ENCODE measurements at regions of chr19 and their contacts with region 1.

Region 1: DNA sequence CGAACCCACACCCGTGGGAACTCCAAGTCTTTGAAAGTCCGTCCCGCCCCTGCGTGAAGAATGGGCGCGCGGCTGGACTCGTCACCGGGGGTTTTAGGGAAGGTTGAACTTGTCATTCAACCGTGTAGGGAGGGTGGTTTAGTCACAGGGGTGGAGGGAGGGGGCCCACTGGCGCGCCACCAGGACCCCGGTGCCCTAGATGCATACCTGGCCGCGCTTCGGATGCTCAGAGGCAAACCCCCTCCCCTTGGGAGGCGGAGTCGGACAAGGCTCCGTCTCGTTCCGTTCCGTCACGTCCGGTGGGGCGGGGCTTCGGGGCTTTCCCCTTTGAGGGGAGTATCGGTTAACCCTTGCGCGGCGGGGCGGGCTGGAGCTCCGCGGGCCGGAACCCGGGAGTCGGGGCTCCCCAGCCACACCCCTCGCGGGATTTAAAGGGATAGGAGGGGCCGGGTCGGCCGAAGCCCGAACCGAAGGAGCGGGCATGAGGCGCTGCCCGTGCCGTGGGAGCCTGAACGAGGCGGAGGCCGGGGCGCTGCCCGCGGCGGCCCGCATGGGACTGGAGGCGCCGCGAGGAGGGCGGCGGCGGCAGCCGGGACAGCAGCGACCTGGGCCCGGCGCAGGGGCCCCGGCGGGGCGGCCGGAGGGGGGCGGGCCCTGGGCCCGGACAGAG is at the starts of genes COQ8B and ITPKC:
- DNase-seq: peak; percentile 99 to 100 (median 100)

Region 2: DNA sequence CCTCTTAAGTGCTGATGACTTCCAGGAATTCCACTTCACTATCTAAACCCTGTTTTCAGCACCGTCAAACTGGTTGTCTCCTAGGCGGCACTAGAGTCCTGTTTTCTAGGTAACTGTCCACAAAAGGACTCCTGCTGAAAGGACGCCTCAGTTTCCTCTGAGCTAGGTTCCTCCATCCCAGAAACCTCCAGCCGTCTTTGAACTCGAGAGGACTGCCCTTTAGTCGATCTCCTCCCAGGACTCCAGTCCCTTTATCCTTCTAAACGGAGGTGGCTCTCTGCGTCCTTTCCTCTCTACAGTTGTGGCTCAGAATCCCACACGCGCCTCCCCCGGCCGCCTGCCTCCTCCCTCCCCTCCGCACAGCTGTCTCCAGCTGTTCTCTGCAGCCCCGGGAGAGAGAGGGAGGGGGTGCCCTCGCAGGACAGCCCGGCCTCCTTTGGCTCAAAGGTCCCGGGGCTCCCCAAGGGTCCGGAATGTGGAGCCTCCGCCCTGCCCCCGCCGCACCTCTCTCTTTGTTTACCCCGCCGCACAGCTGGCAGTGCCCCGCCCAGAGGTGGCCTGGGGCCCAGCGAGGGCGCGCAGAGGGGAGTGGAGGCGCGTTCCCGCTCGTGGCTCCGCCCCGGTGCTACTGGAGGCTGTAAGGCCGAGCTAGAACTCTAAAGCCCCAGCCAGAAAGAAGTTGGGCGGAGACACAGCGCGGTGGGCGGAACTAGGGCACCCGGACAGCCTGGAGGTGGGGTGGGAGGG is 113.2 kb before region 1 on chr19:
- intact Hi-C with region 1: no loop called
- DNase-seq: peak; percentile 72 to 98 (median 88)

Region 3: DNA sequence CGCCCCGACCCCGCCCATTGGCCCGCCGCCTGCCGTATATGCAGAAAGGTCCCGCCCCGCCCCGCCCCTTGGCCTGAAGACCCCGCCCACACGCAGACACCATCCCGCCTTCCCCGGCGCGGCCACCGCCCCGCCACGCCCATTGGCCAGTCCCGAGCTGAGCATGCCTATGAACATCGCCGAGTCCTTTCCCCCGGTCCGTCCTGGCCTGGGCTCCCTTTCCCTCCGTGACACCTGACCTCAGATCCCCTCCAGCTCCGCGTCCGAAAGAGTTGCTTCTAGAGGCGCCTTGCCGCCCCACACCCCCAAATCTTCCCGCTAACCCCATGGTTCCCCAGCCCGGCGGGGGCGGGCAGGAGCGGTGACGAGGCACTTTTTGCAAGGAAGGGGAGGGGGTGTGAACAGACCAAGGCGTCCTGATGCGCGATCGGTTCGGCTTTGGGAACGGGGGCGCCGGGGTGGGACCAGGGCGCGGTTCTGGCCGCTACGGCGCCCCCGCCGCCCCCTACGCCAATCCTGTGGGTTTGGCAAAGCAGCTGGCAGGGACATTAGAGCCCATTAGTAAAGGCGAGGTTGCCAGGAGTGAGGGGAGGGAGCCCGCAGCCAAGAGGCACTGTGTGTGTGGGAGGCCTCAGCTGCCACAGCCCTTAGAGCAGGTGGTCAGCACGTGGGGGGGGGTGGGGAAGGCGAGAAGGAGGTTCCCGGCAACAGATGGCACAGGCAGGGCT is 25.9 kb before region 1 on chr19:
- intact Hi-C with region 1: loop called (anchors 1 kb)
- DNase-seq: peak; percentile 81 to 98 (median 93)

Region 4: DNA sequence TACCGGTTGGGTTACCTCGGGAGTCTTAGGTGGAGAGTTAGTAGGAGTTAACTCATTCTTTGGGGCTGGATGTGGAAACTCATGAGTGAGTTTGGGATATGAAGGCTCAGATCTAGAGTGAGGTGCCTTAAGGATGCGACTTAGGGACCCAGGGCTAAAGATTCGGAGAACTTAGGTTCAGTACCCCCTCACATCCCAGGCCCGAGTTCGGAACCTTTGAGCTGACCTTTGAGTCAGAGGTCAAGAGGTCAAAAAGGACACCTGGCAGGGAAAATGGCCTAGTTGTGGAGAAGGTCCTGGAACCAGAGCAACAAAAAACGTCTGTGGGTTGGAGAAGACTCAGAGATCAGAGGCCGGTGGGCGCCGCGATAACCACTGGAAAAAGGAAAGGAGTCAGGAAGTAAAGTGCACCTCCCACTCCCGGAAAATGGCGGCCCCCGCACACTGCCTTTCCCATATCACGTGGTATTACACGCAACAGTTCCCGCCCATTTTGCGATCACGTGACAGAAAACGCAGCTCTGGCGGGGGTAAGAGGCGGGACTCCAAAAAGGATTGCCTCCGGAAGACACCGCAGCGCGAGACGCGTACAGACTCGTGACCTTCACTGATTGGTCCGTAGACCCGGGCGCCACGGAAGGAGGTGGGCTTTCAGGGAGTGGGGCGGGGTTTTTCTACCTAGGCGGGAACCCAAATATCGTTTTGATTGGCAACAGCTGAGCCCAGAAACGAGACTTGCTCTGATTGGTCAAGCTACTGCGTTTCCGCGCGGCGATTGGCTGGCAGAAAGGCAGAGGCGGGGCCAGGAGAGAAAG is 33.5 kb after region 1 on chr19 and contains the start of gene ACTMAP:
- intact Hi-C with region 1: loop called (anchors 2 kb)
- DNase-seq: peak; percentile 100

Region 5: GRCh38 chr19:40806488-40807468 is 90.0 kb after region 1 on chr19:
- intact Hi-C with region 1: loop called (anchors 10 kb)
- DNase-seq: peak; percentile 80 to 99 (median 90)

Region 6: GRCh38 chr19:41263850-41264580 is 547.2 kb after region 1 on chr19 and contains the start of gene HNRNPUL1:
- intact Hi-C with region 1: loop called (anchors 2 kb)
- DNase-seq: peak; percentile 97 to 100 (median 98)